ENCODE measurements at regions of chr22 and their contacts with region 1.

Region 1: GRCh38 chr22:39135090-39135896 is 17.2 kb downstream of the CBX7 start:
- DNase-seq: peak in 6 of 9 experiments; percentile 19 to 63 (median 52)
- ATAC-seq: peak; percentile 77
- H3K4me3 ChIP-seq: no peak overlapping the region
- H3K4me3 Mint-ChIP-seq: no peak overlapping the region
- H3K27ac ChIP-seq: no peak overlapping the region
- H3K27ac Mint-ChIP-seq: no peak overlapping the region
- H3K4me1 ChIP-seq: peaks cover 8% of the 10 kb centered on the region
- H3K4me1 Mint-ChIP-seq: peaks cover 9% of the 10 kb centered on the region
- H3K27me3 ChIP-seq: no peaks in the 10 kb centered on the region
- H3K27me3 Mint-ChIP-seq: no peaks in the 10 kb centered on the region
- CTCF ChIP-seq: peak; percentile 55

Region 2: GRCh38 chr22:39021552-39022250 is 113.6 kb before region 1 on chr22:
- CTCF ChIA-PET with region 1: no interaction called
- POLR2A ChIA-PET with region 1: no interaction called
- intact Hi-C with region 1: no loop called
- DNase-seq: peak in 1 of 9 experiments; percentile 51
- ATAC-seq: no peak
- H3K4me3 ChIP-seq: peak overlapping the region; percentile 69 to 76
- H3K4me3 Mint-ChIP-seq: peak overlapping the region; percentile 94
- H3K27ac ChIP-seq: peak overlapping the region; percentile 59 to 84
- H3K27ac Mint-ChIP-seq: peak overlapping the region; percentile 97
- H3K4me1 ChIP-seq: peaks cover 38% of the 10 kb centered on the region
- H3K4me1 Mint-ChIP-seq: peaks cover 61% of the 10 kb centered on the region
- H3K27me3 ChIP-seq: no peaks in the 10 kb centered on the region
- H3K27me3 Mint-ChIP-seq: no peaks in the 10 kb centered on the region
- CTCF ChIP-seq: no peak

Region 3: DNA sequence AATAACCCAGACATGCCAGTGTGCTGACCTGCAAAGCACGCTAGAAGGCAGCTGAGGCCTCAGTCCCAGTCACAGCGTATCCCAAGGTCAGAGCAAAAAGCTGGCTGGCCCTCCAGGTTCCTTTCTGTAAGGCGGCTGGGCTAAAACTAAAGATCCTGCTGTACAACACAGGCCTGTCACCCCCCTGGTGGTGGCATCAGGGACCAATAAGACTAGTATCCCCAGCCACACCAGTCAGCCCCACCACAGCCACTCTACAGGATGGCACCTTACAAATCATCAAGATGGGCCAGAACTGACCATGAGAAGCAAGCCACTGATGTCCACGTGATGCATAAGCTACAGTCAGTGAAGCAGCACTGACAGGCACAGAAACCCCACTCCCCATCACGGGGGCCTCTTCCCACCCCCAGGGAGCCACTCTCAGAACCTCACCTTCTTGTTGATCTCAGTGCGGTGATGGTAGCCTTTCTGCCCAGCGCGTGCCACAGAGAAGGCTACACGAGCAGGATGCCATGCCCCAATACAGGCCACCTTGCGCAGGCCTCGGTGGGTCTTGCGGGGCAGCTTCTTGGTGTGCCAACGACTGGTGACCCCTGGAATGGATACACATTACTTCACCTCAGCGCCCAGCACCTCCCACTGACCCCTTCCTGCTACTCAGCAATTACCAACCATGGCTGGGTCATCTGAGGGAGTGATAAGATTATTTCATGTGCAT is 179.1 kb after region 1 on chr22:
- CTCF ChIA-PET with region 1: interaction called, 8 read pairs
- POLR2A ChIA-PET with region 1: no interaction called
- intact Hi-C with region 1: loop called in 1 of 2 experiments (anchors 1 kb)
- DNase-seq: peak in 1 of 9 experiments; percentile 32
- ATAC-seq: no peak
- H3K4me3 ChIP-seq: no peak overlapping the region
- H3K4me3 Mint-ChIP-seq: no peak overlapping the region
- H3K27ac ChIP-seq: no peak overlapping the region
- H3K27ac Mint-ChIP-seq: no peak overlapping the region
- H3K4me1 ChIP-seq: peaks cover 48% of the 10 kb centered on the region
- H3K4me1 Mint-ChIP-seq: peaks cover 46% of the 10 kb centered on the region
- H3K27me3 ChIP-seq: no peaks in the 10 kb centered on the region
- H3K27me3 Mint-ChIP-seq: no peaks in the 10 kb centered on the region
- CTCF ChIP-seq: no peak

Measured in CD8-positive, alpha-beta T cell (primary cell).